ENCODE measurements at regions of chr10 and their contacts with region 1.

Region 1: DNA sequence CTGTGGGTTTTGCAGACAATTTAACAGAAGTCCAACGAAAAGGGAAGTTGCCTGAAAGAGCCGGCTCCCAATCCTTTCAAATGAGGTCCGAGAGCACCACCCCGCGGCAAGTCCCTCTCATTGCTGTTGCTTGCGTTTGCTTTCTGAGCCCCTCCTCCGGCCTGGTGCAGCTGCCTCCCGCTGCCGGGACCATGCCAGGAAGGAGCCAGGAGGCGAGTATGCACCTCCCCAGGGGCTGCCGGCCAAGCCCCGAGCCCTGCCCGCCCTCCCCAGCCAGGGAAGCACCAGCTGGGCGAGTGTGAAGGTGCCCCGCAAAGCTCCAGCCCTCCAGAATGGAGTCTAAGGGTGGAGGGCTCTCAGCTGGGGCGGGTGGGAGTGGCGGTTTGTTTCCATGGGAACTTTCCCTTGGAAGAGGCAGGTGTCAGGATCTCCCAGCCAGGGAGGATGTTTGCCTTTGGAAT is 25.8 kb upstream of the PPP2R2D start:
- H3K4me3 ChIP-seq: no peak overlapping the region
- H3K27ac ChIP-seq: no peak overlapping the region
- H3K4me1 ChIP-seq: no peaks in the 10 kb centered on the region
- CTCF ChIP-seq: peak; percentile 70

Region 2: GRCh38 chr10:130190055-130190736 is 1684.8 kb before region 1 on chr10:
- CTCF ChIA-PET with region 1: interaction called, 10 read pairs
- POLR2A ChIA-PET with region 1: no interaction called
- H3K4me3 ChIP-seq: peak overlapping the region; percentile 35
- H3K27ac ChIP-seq: peak overlapping the region; percentile 64; the same call in 1 of the 2 replicates
- H3K4me1 ChIP-seq: peaks cover 3% of the 10 kb centered on the region; the same call in 1 of the 2 replicates
- CTCF ChIP-seq: peak; percentile 98